K562 (cell line): ENCODE measurements at regions of chr2 and their contacts with region 1.

Region 1: GRCh38 chr2:60881047-60881932 is at the start of gene REL:
- DNase-seq: peak; percentile 92 to 95 (median 94)
- ATAC-seq: peak; percentile 85
- H3K4me3 ChIP-seq: peak within 1 kb of the TSS; percentile 86
- H3K27ac ChIP-seq: peak within 1 kb of the TSS; percentile 86
- H3K4me1 ChIP-seq: peaks cover 5 to 8% of the 10 kb centered on the region in 2 experiments; a peak in 2 of 5 replicates
- H3K27me3 ChIP-seq: no peaks in the 10 kb centered on the region
- CTCF ChIP-seq: peak in 1 of 3 experiments; percentile 0; a peak in 1 of 6 replicates
- EP300 ChIP-seq: no peak
- POLR2A ChIP-seq: peak; percentile 85
- RAD21 ChIP-seq: 0 out of 4 replicates have a peak, but pooled peaks of 1 of the 2 experiments have one; percentile 24
- polyA plus RNA-seq, gene REL: 0.63 to 2.4 TPM

Region 2: GRCh38 chr2:60806988-60807681 is 74.2 kb before region 1 on chr2:
- CTCF ChIA-PET with region 1: no interaction called
- POLR2A ChIA-PET with region 1: no interaction called
- in situ Hi-C with region 1: no loop called
- intact Hi-C with region 1: loop called (anchors 1 kb)
- DNase-seq: peak; percentile 70 to 92 (median 79)
- ATAC-seq: peak; percentile 89
- H3K4me3 ChIP-seq: no peak overlapping the region
- H3K27ac ChIP-seq: peak overlapping the region; percentile 78
- H3K4me1 ChIP-seq: peaks cover 27 to 28% of the 10 kb centered on the region in 2 experiments
- H3K27me3 ChIP-seq: no peaks in the 10 kb centered on the region
- CTCF ChIP-seq: no peak
- EP300 ChIP-seq: peak; percentile 48
- POLR2A ChIP-seq: peak; percentile 57; the same call in 1 of the 2 replicates
- RAD21 ChIP-seq: peak in 1 of 2 experiments; percentile 2; a peak in 2 of 4 replicates

Region 3: DNA sequence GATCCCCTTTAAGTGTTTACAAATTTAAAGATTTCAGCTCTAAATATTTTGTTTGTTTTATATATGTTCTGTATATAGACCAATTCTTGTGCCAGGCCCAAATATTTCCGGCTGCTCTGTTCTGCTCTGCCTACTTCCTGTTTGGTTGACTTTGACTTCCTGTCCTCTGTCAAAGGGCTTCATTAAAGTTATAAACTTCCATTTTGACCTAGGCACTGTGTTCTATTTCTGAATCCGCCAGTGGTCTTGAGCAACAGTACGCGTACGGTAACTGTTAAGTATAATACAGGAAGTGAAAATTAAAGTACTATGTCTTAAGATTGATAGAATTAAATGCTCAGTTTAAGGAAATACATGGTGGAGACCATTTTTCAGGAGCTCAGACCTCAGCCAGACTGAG is 13.4 kb before region 1 on chr2:
- CTCF ChIA-PET with region 1: interaction called, 4 read pairs
- POLR2A ChIA-PET with region 1: interaction called, 10 read pairs
- in situ Hi-C with region 1: no loop called
- intact Hi-C with region 1: no loop called
- DNase-seq: no peak
- ATAC-seq: no peak
- H3K4me3 ChIP-seq: no peak overlapping the region
- H3K27ac ChIP-seq: no peak overlapping the region
- H3K4me1 ChIP-seq: no peaks in the 10 kb centered on the region
- H3K27me3 ChIP-seq: no peaks in the 10 kb centered on the region
- CTCF ChIP-seq: no peak
- EP300 ChIP-seq: no peak
- POLR2A ChIP-seq: no peak
- RAD21 ChIP-seq: no peak

Region 4: GRCh38 chr2:60906395-60906794 is 25.1 kb after region 1 on chr2:
- CTCF ChIA-PET with region 1: no interaction called
- POLR2A ChIA-PET with region 1: no interaction called
- in situ Hi-C with region 1: no loop called
- intact Hi-C with region 1: no loop called
- DNase-seq: no peak
- ATAC-seq: no peak; the same call in 2 of the 3 replicates
- H3K4me3 ChIP-seq: no peak overlapping the region
- H3K27ac ChIP-seq: no peak overlapping the region
- H3K4me1 ChIP-seq: no peaks in the 10 kb centered on the region
- H3K27me3 ChIP-seq: no peaks in the 10 kb centered on the region
- CTCF ChIP-seq: no peak
- EP300 ChIP-seq: no peak
- POLR2A ChIP-seq: no peak
- RAD21 ChIP-seq: no peak

Region 5: DNA sequence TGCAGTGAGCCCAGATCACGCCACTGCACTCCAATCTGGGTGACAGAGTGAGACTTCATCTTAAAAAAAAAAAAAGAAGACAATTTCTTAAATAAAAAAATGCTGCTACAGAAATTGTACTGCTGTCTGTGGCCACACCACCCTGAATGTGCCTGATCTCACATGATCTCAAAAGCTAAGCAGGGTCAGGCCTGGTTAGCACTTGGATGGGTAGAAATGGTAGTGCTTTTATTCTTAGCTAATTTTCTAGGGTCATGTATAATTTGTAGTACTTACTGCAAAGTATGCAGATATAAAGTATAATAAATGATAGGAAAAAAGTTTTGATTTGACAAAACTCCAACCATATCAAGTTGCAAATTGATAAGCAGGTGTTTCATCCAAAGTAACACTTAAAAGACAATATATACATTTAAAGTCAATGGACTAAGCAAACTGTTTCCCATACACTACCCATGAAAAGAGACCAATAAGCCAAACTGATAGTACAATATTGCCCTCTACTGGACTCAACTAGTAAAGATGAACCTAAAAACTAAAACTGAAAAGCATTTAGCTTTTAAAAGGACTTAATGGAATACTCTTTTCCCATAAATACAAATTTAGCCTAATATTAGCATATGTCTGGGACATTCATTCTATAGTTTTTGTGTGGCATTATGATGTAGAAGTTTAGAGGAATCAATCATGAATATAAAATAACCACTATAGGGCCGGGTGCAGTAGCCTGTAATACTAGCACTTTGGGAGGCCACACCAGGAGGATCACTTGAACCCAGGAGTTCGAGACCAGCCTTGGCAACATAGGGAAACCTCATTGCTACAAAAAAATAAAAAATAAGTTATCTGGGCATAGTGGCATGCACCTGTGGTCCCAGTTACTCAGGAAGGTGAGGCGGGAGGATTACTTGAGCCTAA is 117.6 kb after region 1 on chr2:
- CTCF ChIA-PET with region 1: no interaction called
- POLR2A ChIA-PET with region 1: no interaction called
- in situ Hi-C with region 1: no loop called
- intact Hi-C with region 1: loop called (anchors 10 kb)
- DNase-seq: peak; percentile 20 to 65 (median 39)
- ATAC-seq: peak; percentile 83
- H3K4me3 ChIP-seq: no peak overlapping the region
- H3K27ac ChIP-seq: no peak overlapping the region
- H3K4me1 ChIP-seq: no peaks in the 10 kb centered on the region
- H3K27me3 ChIP-seq: no peaks in the 10 kb centered on the region
- CTCF ChIP-seq: peak; percentile 38 to 83 (median 48); a peak in 4 of 6 replicates
- EP300 ChIP-seq: no peak
- POLR2A ChIP-seq: no peak
- RAD21 ChIP-seq: peak; percentile 82 to 95

Region 6: DNA sequence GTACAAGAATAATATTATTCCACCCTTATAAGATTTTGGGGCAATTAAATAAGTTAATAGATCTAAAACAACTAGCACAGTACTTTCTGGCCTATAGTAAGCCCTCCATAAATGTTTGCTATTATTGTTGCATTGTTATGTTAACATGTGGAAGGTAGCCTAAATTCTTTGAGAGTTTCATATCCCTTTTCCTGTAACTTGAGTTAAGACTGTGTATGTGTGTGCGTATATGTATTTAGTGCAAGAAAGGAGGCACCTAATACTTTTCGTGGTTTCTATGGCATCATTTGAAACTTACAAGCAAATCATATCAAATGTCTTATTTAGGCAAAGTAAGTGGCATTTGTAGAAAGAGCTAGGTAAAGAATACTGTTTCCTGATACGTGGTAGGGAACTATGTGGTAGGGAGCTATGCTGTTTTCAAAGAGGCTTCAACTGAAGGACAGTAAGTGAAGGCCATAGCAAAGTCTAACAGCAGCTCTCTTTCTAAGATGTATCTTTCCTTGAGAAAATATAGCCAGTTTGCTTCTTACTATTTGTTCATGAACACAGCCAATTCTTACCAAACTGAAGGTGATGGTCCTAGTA is 243.9 kb after region 1 on chr2:
- CTCF ChIA-PET with region 1: no interaction called
- POLR2A ChIA-PET with region 1: no interaction called
- in situ Hi-C with region 1: no loop called
- intact Hi-C with region 1: no loop called
- DNase-seq: no peak
- ATAC-seq: no peak
- H3K4me3 ChIP-seq: no peak overlapping the region
- H3K27ac ChIP-seq: no peak overlapping the region
- H3K4me1 ChIP-seq: no peaks in the 10 kb centered on the region
- H3K27me3 ChIP-seq: no peaks in the 10 kb centered on the region
- CTCF ChIP-seq: no peak
- EP300 ChIP-seq: no peak
- POLR2A ChIP-seq: no peak
- RAD21 ChIP-seq: no peak

Region 7: GRCh38 chr2:61176755-61177726 is 295.8 kb after region 1 on chr2:
- CTCF ChIA-PET with region 1: no interaction called
- POLR2A ChIA-PET with region 1: no interaction called
- in situ Hi-C with region 1: no loop called
- intact Hi-C with region 1: loop called (anchors 10 kb)
- DNase-seq: peak; percentile 95 to 98 (median 98)
- ATAC-seq: peak; percentile 90
- H3K4me3 ChIP-seq: peak overlapping the region; percentile 68
- H3K27ac ChIP-seq: peak overlapping the region; percentile 88
- H3K4me1 ChIP-seq: peaks cover 30 to 46% of the 10 kb centered on the region in 2 experiments
- H3K27me3 ChIP-seq: no peaks in the 10 kb centered on the region
- CTCF ChIP-seq: peak in 2 of 3 experiments; percentile 21 to 22; a peak in 3 of 6 replicates
- EP300 ChIP-seq: peak; percentile 1; the same call in 1 of the 2 replicates
- POLR2A ChIP-seq: peak; percentile 95
- RAD21 ChIP-seq: peak in 1 of 2 experiments; percentile 28; a peak in 3 of 4 replicates